Mammary epithelial cell (primary cell): ENCODE measurements at regions of chr11 and their contacts with region 1.

Region 1: GRCh38 chr11:58059007-58059350 is 28.2 kb downstream of the OR6Q1 start:
- DNase-seq: peak; percentile 78
- H3K4me3 ChIP-seq: no peak overlapping the region
- H3K27ac ChIP-seq: peak overlapping the region; percentile 77
- H3K4me1 ChIP-seq: peaks cover 47% of the 10 kb centered on the region
- H3K27me3 ChIP-seq: no peaks in the 10 kb centered on the region
- CTCF ChIP-seq: no peak

Region 2: DNA sequence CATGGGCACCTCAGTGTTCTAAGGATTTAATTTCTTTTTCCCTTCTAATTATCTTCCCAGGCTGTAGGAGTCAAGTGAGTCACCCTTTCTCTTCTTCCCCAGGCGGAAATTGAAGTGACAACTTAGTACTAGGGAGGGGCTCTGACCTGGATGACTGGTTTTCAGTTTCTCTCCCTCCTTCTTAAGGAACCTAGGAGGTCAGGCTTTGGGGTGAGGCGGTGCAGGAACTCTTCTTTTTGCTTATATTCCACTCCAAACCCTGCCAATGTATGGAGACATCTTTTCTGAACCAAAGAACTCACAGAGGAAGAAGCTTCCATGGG is 378.5 kb before region 1 on chr11:
- CTCF ChIA-PET with region 1: interaction called, 13 read pairs
- dilution Hi-C with region 1: no loop called
- in situ Hi-C with region 1: no loop called
- intact Hi-C with region 1: no loop called
- DNase-seq: peak; percentile 73
- H3K4me3 ChIP-seq: no peak overlapping the region
- H3K27ac ChIP-seq: peak overlapping the region; percentile 31
- H3K4me1 ChIP-seq: peaks cover 25% of the 10 kb centered on the region
- H3K27me3 ChIP-seq: no peaks in the 10 kb centered on the region
- CTCF ChIP-seq: no peak

Region 3: DNA sequence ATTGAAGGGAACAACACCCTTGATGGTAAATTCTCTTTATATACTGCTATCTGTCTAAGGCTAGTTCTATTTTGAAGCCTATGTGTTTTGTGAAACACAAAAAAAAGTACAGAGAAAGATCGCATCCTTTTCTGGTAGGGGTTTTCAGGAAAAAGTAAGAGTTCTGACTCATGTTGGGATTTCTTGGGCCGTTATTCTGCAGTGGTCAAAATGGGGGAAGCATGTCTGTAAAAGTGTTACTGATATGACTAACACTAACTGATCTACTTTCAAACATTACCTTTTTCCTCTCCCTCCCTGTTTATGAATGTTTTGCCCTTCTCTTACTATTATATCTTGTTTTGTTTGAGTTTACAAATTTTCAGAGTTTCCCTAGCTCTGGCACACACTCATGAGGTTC is 243.5 kb before region 1 on chr11:
- CTCF ChIA-PET with region 1: no interaction called
- dilution Hi-C with region 1: no loop called
- in situ Hi-C with region 1: no loop called
- intact Hi-C with region 1: loop called (anchors 5 kb)
- DNase-seq: no peak
- H3K4me3 ChIP-seq: no peak overlapping the region
- H3K27ac ChIP-seq: no peak overlapping the region
- H3K4me1 ChIP-seq: no peaks in the 10 kb centered on the region
- H3K27me3 ChIP-seq: no peaks in the 10 kb centered on the region
- CTCF ChIP-seq: no peak

Region 4: DNA sequence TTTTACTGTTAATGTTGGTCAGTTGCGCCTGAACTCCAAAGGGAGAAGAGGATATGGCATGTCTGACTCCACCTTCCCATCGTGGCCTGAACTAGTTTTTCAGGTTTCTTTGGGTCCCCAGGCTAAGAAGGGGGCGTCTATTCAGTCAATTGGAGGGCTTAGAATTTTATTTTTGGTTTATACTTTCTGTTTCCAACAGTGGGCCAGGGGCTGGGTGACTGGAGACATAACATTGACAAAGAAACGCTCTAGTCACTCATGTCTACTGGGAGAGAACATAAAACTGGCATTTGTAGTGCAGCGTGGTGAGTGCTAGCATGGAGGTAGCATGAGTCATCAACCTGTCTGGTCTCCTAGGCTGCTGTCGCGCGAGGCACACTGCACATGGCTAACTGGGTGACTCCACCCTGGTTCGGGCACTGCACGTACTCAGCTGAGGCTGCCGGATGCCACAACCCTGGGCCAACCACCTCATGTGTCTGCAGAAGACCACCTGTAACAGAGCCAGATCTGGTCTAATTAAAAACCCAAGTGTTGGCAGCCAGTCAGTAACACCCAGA is 155.3 kb before region 1 on chr11:
- CTCF ChIA-PET with region 1: no interaction called
- dilution Hi-C with region 1: no loop called
- in situ Hi-C with region 1: no loop called
- intact Hi-C with region 1: loop called (anchors 1 kb)
- DNase-seq: peak; percentile 88
- H3K4me3 ChIP-seq: no peak overlapping the region
- H3K27ac ChIP-seq: peak overlapping the region; percentile 89
- H3K4me1 ChIP-seq: peaks cover 68% of the 10 kb centered on the region
- H3K27me3 ChIP-seq: no peaks in the 10 kb centered on the region
- CTCF ChIP-seq: no peak